Caco-2 (cell line): ENCODE measurements at regions of chr1 and their contacts with region 1.

Region 1: GRCh38 chr1:17596651-17597509 is 57.4 kb downstream of the ARHGEF10L start:
- DNase-seq: peak; percentile 72 to 79
- H3K4me3 ChIP-seq: peak overlapping the region; percentile 25
- H3K4me3 Mint-ChIP-seq: peak overlapping the region; percentile 63
- H3K27ac Mint-ChIP-seq: peak overlapping the region; percentile 67
- H3K4me1 ChIP-seq: peaks cover 40% of the 10 kb centered on the region
- H3K4me1 Mint-ChIP-seq: peaks cover 19% of the 10 kb centered on the region
- H3K27me3 ChIP-seq: no peaks in the 10 kb centered on the region
- H3K27me3 Mint-ChIP-seq: no peaks in the 10 kb centered on the region
- CTCF ChIP-seq: no peak

Region 2: DNA sequence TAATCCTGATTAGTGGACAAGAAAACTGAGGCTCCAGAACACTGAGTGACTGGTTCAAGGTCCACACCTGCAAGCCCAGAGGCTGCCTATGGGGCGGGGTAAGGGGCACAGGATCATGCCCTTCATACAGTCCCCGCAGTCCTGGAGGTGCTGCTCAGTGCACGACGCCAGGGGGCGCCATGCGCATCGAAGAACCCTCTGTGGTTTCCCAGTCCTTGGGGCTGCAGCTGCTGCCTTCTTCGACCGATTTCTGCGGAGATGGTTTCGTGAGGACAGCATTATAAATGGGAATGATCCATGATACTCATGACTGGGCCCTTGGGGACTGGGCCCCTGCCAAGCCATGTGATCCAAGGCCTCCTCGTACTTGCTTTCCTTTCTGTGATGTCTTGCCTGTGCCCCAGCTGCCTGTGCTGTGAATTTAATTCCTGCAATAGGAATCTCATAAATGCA is 94.5 kb before region 1 on chr1:
- CTCF ChIA-PET with region 1: interaction called, 3 read pairs
- POLR2A ChIA-PET with region 1: interaction called, 11 read pairs
- intact Hi-C with region 1: no loop called
- DNase-seq: peak; percentile 68 to 80
- H3K4me3 ChIP-seq: no peak overlapping the region
- H3K4me3 Mint-ChIP-seq: no peak overlapping the region
- H3K27ac Mint-ChIP-seq: no peak overlapping the region
- H3K4me1 ChIP-seq: 0 out of 2 replicates have a peak, but pooled peaks cover 7% of the 10 kb centered on the region
- H3K4me1 Mint-ChIP-seq: peaks cover 7% of the 10 kb centered on the region
- H3K27me3 ChIP-seq: no peaks in the 10 kb centered on the region
- H3K27me3 Mint-ChIP-seq: no peaks in the 10 kb centered on the region
- CTCF ChIP-seq: peak; percentile 72 to 74

Region 3: DNA sequence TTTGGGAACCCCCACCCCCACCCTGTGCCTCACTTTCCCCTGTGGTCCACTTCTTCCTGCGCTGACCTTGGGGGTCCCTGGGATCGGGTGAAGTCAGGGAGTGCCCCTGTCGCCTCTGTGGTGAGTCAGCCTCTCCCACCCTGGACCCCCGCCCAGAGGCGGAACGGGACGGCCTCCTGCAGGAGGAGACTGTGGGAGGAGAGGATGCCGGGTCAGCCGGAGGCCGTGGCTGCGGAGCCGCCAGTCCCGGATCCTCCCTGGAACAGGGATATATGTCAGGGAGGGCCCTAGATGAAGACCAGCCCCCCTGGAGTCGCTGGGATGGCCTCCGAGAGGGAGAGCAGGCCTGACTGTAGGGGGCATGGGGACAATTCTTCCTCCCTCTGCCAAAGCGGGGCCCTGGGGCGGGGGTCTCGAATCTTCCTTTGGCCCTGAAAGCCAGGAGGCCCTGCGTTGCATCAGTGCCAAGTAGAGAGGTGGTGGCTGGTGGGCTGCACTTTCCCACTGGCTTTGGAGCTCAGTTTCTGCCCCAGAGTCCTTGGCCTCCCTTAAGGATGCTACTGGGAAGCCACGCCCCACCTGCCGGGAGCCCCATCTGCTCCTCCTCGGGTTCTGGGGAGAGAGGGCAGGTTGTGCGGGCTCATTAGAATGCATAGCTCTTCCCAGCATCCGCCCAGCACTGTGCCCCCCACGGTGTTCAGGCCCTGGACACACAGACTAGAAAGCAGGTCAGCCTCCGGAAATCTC is 56.5 kb before region 1 on chr1:
- CTCF ChIA-PET with region 1: no interaction called
- POLR2A ChIA-PET with region 1: no interaction called
- intact Hi-C with region 1: loop called (anchors 5 kb)
- DNase-seq: no peak
- H3K4me3 ChIP-seq: peak overlapping the region; percentile 86
- H3K4me3 Mint-ChIP-seq: peak overlapping the region; percentile 85
- H3K27ac Mint-ChIP-seq: no peak overlapping the region
- H3K4me1 ChIP-seq: peaks cover 13% of the 10 kb centered on the region; the same call in 1 of the 2 replicates
- H3K4me1 Mint-ChIP-seq: no peaks in the 10 kb centered on the region
- H3K27me3 ChIP-seq: no peaks in the 10 kb centered on the region
- H3K27me3 Mint-ChIP-seq: no peaks in the 10 kb centered on the region
- CTCF ChIP-seq: no peak

Region 4: DNA sequence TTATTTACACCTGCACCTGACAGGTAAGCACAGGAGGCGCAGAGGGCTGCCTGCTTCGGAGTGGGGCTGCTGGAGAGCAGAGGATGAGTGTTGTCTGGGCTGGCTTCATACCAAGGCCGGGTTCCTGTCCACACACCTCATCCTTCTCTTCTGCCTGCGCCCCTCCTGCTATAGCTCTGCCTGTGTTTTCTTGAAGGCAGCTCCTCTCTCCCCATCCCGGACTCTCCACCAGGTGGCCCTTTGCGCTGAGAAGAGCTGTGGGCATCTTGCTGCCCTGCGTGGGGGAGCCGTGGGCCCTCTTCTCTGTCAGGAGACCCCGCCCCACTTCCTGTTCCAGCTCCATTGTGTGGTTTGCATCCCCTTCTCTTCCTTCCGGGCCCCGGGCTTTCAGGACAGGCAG is 22.4 kb before region 1 on chr1:
- CTCF ChIA-PET with region 1: interaction called, 28 read pairs
- POLR2A ChIA-PET with region 1: interaction called, 9 read pairs
- intact Hi-C with region 1: no loop called
- DNase-seq: peak; percentile 49 to 59
- H3K4me3 ChIP-seq: no peak overlapping the region
- H3K4me3 Mint-ChIP-seq: no peak overlapping the region
- H3K27ac Mint-ChIP-seq: peak overlapping the region; percentile 65
- H3K4me1 ChIP-seq: peaks cover 34% of the 10 kb centered on the region
- H3K4me1 Mint-ChIP-seq: peaks cover 21% of the 10 kb centered on the region
- H3K27me3 ChIP-seq: no peaks in the 10 kb centered on the region
- H3K27me3 Mint-ChIP-seq: no peaks in the 10 kb centered on the region
- CTCF ChIP-seq: peak; percentile 37 to 51

Region 5: DNA sequence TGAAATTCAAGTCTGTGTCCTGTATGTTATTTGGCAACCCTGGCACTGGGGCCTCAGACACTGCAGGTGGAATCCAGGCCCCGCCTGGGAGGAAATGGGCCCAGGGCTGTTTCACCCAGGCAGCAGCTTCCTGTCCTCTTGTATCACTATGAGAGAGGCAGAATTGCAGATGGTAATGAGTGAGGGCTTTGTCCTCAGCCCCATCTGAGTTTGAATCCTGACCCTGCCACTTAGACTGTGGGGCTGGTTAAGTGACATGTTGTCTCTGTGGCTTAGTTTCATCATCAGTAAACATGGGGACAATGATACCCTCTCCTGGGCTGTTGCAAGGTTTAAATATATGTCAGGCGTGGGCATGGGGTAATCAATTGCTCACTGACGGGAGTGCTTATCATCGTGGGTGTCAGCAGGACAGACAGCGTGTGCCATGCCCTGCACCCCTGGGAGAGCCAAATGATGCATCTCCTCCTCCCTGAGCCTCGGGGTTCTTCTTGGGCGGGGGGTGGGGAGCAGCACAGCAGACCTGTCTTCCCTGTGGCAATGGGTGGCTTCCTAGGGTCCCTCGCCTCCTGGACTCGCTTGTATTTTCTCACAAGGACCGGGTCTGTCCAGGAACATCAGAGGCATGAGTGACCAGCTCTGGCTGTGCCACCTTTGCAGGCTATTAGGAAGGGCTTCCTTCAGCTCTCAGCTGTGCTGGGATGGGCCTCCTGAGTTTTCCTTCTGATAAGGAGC is 15.3 kb before region 1 on chr1:
- CTCF ChIA-PET with region 1: interaction called, 13 read pairs
- POLR2A ChIA-PET with region 1: interaction called, 7 read pairs
- intact Hi-C with region 1: loop called (anchors 2 kb)
- DNase-seq: no peak
- H3K4me3 ChIP-seq: no peak overlapping the region
- H3K4me3 Mint-ChIP-seq: peak overlapping the region; percentile 36
- H3K27ac Mint-ChIP-seq: no peak overlapping the region
- H3K4me1 ChIP-seq: peaks cover 50% of the 10 kb centered on the region
- H3K4me1 Mint-ChIP-seq: peaks cover 25% of the 10 kb centered on the region
- H3K27me3 ChIP-seq: no peaks in the 10 kb centered on the region
- H3K27me3 Mint-ChIP-seq: no peaks in the 10 kb centered on the region
- CTCF ChIP-seq: no peak

Region 6: GRCh38 chr1:17653728-17654351 is 57.0 kb after region 1 on chr1:
- CTCF ChIA-PET with region 1: no interaction called
- POLR2A ChIA-PET with region 1: no interaction called
- intact Hi-C with region 1: no loop called
- DNase-seq: peak in 1 of 2 experiments; percentile 56
- H3K4me3 ChIP-seq: no peak overlapping the region
- H3K4me3 Mint-ChIP-seq: no peak overlapping the region
- H3K27ac Mint-ChIP-seq: no peak overlapping the region
- H3K4me1 ChIP-seq: no peaks in the 10 kb centered on the region
- H3K4me1 Mint-ChIP-seq: no peaks in the 10 kb centered on the region
- H3K27me3 ChIP-seq: no peaks in the 10 kb centered on the region
- H3K27me3 Mint-ChIP-seq: no peaks in the 10 kb centered on the region
- CTCF ChIP-seq: peak; percentile 62 to 63